ENCODE measurements at regions of chr20 and their contacts with region 1.

Region 1: GRCh38 chr20:37282556-37282955 is 6.9 kb upstream of the MANBAL start:
- DNase-seq: no peak
- H3K4me3 ChIP-seq: no peak overlapping the region
- CTCF ChIP-seq: no peak
- POLR2A ChIP-seq: no peak

Region 2: DNA sequence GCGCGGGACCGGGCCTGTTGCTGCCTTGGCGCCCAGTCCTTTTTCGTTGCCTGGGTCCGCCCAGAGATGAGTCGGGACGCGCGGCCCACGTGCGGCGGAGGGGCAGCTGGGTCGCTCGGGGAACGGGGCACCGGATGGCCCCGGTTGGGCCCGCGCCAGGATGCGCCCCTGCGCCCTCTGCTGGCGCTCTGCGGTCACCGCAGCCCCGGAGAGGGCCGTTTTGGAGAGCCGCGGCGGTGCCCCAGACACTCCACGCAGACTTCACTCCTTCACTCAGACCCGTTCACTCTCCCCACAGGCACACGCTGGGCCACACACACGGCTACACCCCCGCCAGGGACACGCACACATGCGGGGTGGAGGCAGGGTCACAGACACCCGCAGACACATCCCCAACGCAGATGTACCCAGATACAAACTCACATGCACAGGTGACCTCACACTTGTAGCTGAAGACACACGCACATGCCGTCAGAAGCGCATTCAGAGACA is 102.2 kb after region 1 on chr20:
- intact Hi-C with region 1: loop called (anchors 5 kb)
- DNase-seq: peak; percentile 43 to 93
- H3K4me3 ChIP-seq: no peak overlapping the region
- CTCF ChIP-seq: peak in 1 of 3 donors; percentile 69
- POLR2A ChIP-seq: no peak

Region 3: GRCh38 chr20:37411408-37412219 is 129.1 kb after region 1 on chr20:
- intact Hi-C with region 1: no loop called
- DNase-seq: no peak
- H3K4me3 ChIP-seq: no peak overlapping the region
- CTCF ChIP-seq: peak in 1 of 3 donors; percentile 82
- POLR2A ChIP-seq: no peak

Region 4: DNA sequence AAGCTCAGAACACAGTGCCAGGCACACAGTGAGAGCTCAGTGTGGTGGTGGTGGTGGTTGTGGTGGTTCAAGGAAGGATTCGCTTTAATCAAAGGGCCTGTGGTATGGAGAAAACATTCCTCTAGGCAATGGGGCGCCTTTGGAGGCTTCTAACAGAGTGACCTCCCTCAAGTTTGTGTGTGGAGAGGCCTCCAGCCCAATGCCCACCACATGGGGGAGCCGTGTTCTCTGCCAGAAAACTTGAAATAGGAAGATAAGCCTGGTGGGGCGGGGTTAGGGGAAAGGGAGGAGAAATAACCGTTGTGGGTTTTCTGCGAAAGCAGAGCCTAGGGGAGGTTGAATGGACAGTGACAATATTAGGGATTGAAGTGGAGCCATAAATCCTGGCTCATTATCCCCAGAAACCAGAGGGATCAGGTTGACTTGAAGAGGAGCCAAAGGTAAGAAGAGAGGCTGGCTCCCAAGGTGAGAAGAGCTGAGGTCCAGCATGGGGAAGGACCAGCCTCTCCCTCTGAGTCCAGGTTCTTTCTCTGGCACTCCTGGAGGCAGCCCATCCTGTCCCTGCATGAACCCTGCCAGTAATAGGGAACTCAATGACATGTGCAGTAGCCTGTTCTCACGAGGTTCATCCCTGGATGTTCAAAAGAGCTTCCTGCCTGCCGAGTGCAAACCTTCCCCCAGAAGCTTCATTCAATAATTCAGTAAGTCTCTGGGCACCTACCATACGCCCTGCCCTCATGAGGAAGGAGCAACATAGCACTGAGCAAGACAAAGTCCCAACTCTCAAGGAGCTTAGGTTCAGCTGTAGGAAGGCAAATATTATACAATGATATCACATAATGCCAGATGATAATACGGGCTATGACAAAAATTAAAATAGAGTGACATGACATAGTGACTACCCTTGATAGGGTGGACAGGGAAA is 831.1 kb after region 1 on chr20:
- intact Hi-C with region 1: no loop called
- DNase-seq: peak in 1 of 2 donors; percentile 80
- H3K4me3 ChIP-seq: no peak overlapping the region
- CTCF ChIP-seq: no peak
- POLR2A ChIP-seq: no peak

Measured in lower leg skin (tissue), 4 donors.